Endothelial cell of umbilical vein (primary cell): ENCODE measurements at regions of chr11 and their contacts with region 1.

Region 1: GRCh38 chr11:130069684-130070108 is at the start of gene APLP2:
- DNase-seq: peak; percentile 98
- H3K4me3 ChIP-seq: peak within 1 kb of the TSS; percentile 56 to 96 (median 92)
- H3K27ac ChIP-seq: peak within 1 kb of the TSS; percentile 82
- H3K4me1 ChIP-seq: peaks cover 12% of the 10 kb centered on the region
- H3K27me3 ChIP-seq: no peaks in the 10 kb centered on the region
- CTCF ChIP-seq: no peak
- POLR2A ChIP-seq: peak; percentile 99
- total RNA-seq, gene APLP2: 503 and 543 TPM in 2 replicates

Region 2: DNA sequence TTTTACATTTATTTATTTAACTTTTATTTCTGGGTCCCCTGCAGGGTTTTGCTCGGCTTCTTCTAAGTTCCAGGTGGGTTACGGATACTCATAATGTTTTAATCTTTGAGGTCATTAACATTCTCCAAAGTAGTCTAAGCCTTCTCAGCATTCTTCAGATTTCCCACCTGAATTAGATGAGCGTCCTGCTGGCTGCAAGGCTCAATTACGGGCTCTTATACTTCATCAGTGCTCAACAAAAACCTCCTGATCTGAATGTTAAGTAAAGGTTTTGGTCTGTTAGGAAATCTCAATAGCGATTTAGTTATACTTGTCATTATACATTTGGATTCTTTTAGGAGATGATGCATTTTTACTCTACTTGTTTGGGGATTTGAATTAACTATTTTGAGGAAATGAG is 147.0 kb before region 1 on chr11:
- CTCF ChIA-PET with region 1: interaction called, 16 read pairs
- POLR2A ChIA-PET with region 1: no interaction called
- dilution Hi-C with region 1: no loop called
- intact Hi-C with region 1: loop called (anchors 1 kb)
- DNase-seq: no peak
- H3K4me3 ChIP-seq: no peak overlapping the region
- H3K27ac ChIP-seq: no peak overlapping the region
- H3K4me1 ChIP-seq: no peaks in the 10 kb centered on the region
- H3K27me3 ChIP-seq: no peaks in the 10 kb centered on the region
- CTCF ChIP-seq: no peak
- POLR2A ChIP-seq: no peak

Region 3: DNA sequence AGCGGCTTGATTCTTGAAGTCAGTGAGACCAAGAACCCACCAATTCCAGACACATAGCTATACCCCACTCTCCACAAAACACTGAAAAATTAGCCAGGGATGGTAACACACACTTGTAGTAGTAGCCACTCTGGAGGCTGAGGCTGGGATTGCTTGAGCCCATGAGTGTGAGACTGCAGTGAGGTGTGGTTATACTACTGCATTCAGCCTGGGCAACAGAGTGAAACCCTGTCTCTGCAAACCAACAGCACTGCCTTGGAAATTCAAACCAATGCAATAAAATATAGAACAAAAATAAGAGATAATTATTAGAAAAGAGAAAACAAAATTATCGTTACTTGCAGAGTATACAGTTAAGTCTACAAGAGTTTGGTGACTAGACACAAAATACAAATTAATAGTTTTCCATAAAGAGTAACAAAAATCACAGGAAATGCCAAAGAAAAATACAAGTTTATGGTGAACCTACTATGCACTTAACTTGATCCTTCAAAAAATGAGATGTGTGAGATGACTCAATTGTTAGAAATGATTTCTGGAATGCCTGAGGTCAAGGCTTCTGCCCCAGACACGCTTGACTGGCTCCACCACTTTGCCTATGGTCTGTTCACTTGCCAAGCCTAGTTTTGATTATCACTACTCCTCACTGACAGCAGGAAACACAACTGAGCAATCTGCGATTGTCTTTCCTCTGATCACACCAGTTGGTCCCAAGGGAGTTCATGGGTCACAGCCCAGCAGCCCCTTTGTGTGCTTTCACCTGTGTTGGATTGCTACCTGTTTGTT is 46.7 kb before region 1 on chr11:
- CTCF ChIA-PET with region 1: no interaction called
- POLR2A ChIA-PET with region 1: interaction called, 3 read pairs
- dilution Hi-C with region 1: no loop called
- intact Hi-C with region 1: loop called (anchors 1 kb)
- DNase-seq: peak; percentile 56
- H3K4me3 ChIP-seq: no peak overlapping the region
- H3K27ac ChIP-seq: peak overlapping the region; percentile 87
- H3K4me1 ChIP-seq: peaks cover 18% of the 10 kb centered on the region
- H3K27me3 ChIP-seq: no peaks in the 10 kb centered on the region
- CTCF ChIP-seq: no peak
- POLR2A ChIP-seq: no peak

Region 4: DNA sequence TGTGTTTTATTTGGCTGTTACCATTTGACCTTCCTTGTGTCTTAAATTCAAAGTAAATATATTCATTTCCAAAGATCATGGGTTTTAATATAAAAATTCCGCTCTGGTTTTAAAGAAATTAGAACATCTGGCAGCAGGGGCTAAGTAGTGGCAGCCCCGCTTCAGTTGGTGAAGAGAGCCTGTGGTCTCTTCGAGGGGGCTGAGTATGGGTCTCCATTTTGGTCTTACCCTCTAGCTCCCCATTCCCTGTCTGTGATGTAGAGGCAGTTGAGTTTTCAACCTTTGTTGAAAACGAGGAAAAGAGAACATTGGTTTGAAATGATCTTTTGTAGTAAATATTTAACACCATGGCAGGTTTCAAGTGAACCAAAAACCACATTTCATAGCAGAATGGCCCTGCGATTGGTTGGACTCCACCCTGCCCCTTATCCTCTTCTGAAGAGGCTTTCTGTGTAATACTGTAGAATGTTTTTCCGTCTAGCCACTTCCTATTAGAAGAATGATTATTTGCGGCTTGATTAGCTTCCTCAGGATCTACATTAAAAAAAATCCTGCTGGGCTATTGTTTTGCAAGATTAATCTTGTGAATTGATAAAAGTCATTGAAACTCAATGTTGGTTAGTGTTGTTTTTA is 17.7 kb after region 1 on chr11:
- CTCF ChIA-PET with region 1: interaction called, 13 read pairs
- POLR2A ChIA-PET with region 1: no interaction called
- dilution Hi-C with region 1: no loop called
- intact Hi-C with region 1: no loop called
- DNase-seq: no peak
- H3K4me3 ChIP-seq: no peak overlapping the region
- H3K27ac ChIP-seq: no peak overlapping the region
- H3K4me1 ChIP-seq: peaks cover 27% of the 10 kb centered on the region
- H3K27me3 ChIP-seq: no peaks in the 10 kb centered on the region
- CTCF ChIP-seq: no peak
- POLR2A ChIP-seq: no peak

Region 5: GRCh38 chr11:130827451-130828377 is 758.0 kb after region 1 on chr11:
- CTCF ChIA-PET with region 1: no interaction called
- POLR2A ChIA-PET with region 1: no interaction called
- dilution Hi-C with region 1: no loop called
- intact Hi-C with region 1: no loop called
- DNase-seq: peak; percentile 65
- H3K4me3 ChIP-seq: no peak overlapping the region
- H3K27ac ChIP-seq: no peak overlapping the region
- H3K4me1 ChIP-seq: no peaks in the 10 kb centered on the region
- H3K27me3 ChIP-seq: no peaks in the 10 kb centered on the region
- CTCF ChIP-seq: peak; percentile 41 to 69
- POLR2A ChIP-seq: no peak